ENCODE measurements at regions of chrX and their contacts with region 1.

Region 1: GRCh38 chrX:154748712-154749343 is 2.0 kb downstream of the GAB3 start:
- DNase-seq: peak; percentile 60
- H3K4me3 Mint-ChIP-seq: peak overlapping the region; percentile 45
- H3K27ac Mint-ChIP-seq: peak overlapping the region; percentile 57
- H3K4me1 Mint-ChIP-seq: peaks cover 29% of the 10 kb centered on the region
- H3K27me3 Mint-ChIP-seq: peaks cover 2% of the 10 kb centered on the region

Region 2: GRCh38 chrX:154730253-154730891 is 18.5 kb before region 1 on chrX:
- CTCF ChIA-PET with region 1: interaction called, 12 read pairs
- POLR2A ChIA-PET with region 1: no interaction called
- DNase-seq: no peak
- H3K4me3 Mint-ChIP-seq: no peak overlapping the region
- H3K27ac Mint-ChIP-seq: no peak overlapping the region
- H3K4me1 Mint-ChIP-seq: peaks cover 94% of the 10 kb centered on the region
- H3K27me3 Mint-ChIP-seq: no peaks in the 10 kb centered on the region

Region 3: DNA sequence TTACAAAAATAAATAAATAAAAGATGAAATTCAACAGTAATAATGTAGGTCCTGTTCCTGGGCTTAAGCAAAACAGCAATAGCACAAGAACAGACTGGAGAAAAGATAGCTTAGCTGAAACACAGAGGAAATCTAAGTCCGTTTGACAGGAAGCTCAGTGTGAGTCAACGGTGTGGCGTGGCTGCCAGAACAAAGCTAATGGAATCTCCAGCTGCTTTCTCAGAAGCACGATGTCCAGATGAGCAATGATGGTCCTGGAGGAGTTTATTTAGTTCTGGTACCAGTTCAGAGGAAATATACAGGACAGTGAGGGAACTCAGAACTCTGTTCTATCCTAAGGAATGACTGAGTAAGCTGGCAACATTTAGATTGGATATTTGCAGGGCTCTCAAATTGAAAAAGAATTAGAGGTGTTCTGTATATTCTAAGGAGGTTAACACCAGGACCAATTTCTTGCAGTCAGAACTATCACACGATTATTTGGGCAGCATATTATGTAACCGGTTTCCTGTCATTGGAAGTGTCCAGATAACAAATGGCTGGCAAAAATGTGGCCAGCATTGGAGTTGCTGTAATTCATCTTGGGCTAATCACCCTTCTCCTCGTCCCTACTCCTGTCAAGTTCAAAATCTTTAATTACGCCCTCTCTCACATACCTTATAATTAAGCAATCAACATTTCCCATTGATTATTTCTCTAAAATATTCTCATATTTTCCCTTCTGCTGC is 10.7 kb before region 1 on chrX:
- CTCF ChIA-PET with region 1: interaction called, 14 read pairs
- POLR2A ChIA-PET with region 1: no interaction called
- DNase-seq: no peak
- H3K4me3 Mint-ChIP-seq: no peak overlapping the region
- H3K27ac Mint-ChIP-seq: peak overlapping the region; percentile 70
- H3K4me1 Mint-ChIP-seq: peaks cover 72% of the 10 kb centered on the region
- H3K27me3 Mint-ChIP-seq: no peaks in the 10 kb centered on the region

Region 4: DNA sequence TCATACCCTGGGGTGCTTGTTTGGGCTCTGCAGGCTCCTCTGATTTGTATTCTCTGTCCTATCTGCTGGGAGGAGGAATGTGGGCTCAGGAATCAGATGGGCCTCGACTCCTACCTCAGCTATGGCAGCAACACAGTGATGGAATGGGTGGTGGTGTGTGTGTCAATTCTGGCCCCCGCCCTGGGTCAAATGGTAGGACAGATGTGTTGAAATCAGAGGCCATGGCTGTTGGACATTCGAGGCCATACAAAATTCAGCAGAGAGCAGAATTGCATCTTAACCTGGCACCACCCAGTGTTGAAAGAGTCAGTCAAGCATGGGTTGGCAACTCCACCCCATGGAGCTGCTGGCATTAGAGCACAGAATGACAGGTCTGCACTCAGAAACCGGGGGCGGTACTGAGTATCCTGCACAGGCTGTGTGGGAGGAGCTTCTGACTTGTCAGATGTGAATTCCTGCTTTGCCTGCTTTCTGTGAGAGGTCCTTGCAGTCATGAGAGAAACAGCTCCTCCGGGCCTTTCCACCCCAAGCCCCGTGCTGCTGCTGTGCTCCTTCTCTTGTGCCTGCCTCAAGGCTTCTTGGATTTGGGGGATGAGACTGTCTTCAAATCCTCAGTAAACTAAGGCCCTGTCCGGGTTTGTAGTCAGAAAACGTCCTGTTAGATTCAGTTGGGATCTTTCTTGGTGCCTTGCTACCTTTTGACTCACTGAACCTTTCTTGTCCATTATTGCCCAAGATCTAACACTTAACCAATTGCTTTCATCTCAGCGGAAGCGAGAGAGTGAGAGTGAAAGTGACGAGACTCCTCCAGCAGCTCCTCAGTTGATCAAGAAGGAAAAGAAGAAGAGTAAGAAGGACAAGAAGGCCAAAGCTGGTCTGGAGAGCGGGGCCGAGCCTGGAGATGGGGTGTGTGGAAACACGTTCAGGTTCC is 26.9 kb after region 1 on chrX:
- CTCF ChIA-PET with region 1: no interaction called
- POLR2A ChIA-PET with region 1: no interaction called
- DNase-seq: no peak
- H3K4me3 Mint-ChIP-seq: no peak overlapping the region
- H3K27ac Mint-ChIP-seq: peak overlapping the region; percentile 54
- H3K4me1 Mint-ChIP-seq: peaks cover 23% of the 10 kb centered on the region
- H3K27me3 Mint-ChIP-seq: no peaks in the 10 kb centered on the region

Region 5: GRCh38 chrX:154785716-154786115 is 36.9 kb after region 1 on chrX:
- CTCF ChIA-PET with region 1: no interaction called
- POLR2A ChIA-PET with region 1: no interaction called
- DNase-seq: no peak
- H3K4me3 Mint-ChIP-seq: no peak overlapping the region
- H3K27ac Mint-ChIP-seq: no peak overlapping the region
- H3K4me1 Mint-ChIP-seq: peaks cover 34% of the 10 kb centered on the region
- H3K27me3 Mint-ChIP-seq: no peaks in the 10 kb centered on the region